ENCODE measurements at regions of chr11 and their contacts with region 1.

Region 1: GRCh38 chr11:73876424-73877300 is at the starts of genes COA4 and PAAF1:
- DNase-seq: peak; percentile 98
- H3K4me3 ChIP-seq: peak within 1 kb of the TSS; percentile 91 to 95 (median 93)
- H3K27ac ChIP-seq: peak within 1 kb of the TSS; percentile 94
- H3K4me1 ChIP-seq: peaks cover 3% of the 10 kb centered on the region
- H3K27me3 ChIP-seq: no peaks in the 10 kb centered on the region
- CTCF ChIP-seq: no peak
- total RNA-seq, gene COA4: 58.0 to 75.4 TPM
- total RNA-seq, gene PAAF1: 7.7 to 20.0 TPM

Region 2: GRCh38 chr11:73760679-73761402 is 115.8 kb before region 1 on chr11 and contains the start of gene RAB6A:
- CTCF ChIA-PET with region 1: no interaction called
- dilution Hi-C with region 1: no loop called
- in situ Hi-C with region 1: no loop called
- intact Hi-C with region 1: loop called (anchors 2 kb)
- DNase-seq: peak; percentile 99
- H3K4me3 ChIP-seq: peak within 1 kb of the TSS; percentile 83 to 91 (median 88)
- H3K27ac ChIP-seq: peak within 1 kb of the TSS; percentile 62
- H3K4me1 ChIP-seq: peaks cover 6% of the 10 kb centered on the region
- H3K27me3 ChIP-seq: no peaks in the 10 kb centered on the region
- CTCF ChIP-seq: peak; percentile 5 to 35
- total RNA-seq, gene RAB6A: 189 to 218 TPM

Region 3: DNA sequence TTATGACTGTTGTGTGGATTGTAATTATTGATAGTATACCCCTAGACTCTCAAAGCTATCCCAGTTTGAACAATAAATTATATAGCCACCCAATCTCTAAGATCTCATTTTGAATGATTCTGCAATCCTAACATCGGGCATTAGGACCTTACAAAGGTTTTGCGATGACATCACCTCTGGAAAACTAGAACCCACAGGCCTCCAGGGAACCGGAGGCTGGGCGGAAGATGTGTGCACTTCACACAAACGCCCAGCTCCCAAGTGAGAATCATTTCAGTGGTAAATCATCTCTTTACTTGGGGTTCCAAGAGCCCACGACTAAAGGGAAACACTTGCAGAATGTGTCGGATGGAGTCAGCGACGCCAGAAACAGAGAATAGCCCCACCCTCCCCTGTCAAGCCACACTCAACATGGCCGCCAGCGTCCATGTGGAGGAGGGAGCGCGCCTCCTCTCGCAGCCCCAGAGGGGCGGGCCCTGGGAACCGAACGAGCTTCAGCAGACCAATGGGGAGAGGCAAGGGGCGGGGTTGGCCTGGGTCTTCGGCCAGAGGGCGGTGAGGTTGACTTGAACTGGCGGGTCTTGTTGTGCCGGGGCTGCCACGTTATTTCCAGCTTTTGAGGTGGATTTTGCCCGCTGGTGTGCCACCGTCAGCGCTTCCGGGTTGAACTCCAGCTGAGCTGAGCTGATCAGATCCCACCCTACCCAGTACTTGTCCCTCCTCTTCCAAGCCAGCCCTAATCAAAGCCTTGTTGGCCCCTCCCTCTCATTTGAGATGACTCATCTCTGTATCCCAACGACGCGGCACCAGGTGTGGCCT is 97.4 kb before region 1 on chr11:
- CTCF ChIA-PET with region 1: no interaction called
- dilution Hi-C with region 1: no loop called
- in situ Hi-C with region 1: no loop called
- intact Hi-C with region 1: loop called (anchors 2 kb)
- DNase-seq: peak; percentile 98
- H3K4me3 ChIP-seq: peak overlapping the region; percentile 52 to 55 (median 54)
- H3K27ac ChIP-seq: peak overlapping the region; percentile 98
- H3K4me1 ChIP-seq: peaks cover 4% of the 10 kb centered on the region
- H3K27me3 ChIP-seq: no peaks in the 10 kb centered on the region
- CTCF ChIP-seq: no peak

Region 4: DNA sequence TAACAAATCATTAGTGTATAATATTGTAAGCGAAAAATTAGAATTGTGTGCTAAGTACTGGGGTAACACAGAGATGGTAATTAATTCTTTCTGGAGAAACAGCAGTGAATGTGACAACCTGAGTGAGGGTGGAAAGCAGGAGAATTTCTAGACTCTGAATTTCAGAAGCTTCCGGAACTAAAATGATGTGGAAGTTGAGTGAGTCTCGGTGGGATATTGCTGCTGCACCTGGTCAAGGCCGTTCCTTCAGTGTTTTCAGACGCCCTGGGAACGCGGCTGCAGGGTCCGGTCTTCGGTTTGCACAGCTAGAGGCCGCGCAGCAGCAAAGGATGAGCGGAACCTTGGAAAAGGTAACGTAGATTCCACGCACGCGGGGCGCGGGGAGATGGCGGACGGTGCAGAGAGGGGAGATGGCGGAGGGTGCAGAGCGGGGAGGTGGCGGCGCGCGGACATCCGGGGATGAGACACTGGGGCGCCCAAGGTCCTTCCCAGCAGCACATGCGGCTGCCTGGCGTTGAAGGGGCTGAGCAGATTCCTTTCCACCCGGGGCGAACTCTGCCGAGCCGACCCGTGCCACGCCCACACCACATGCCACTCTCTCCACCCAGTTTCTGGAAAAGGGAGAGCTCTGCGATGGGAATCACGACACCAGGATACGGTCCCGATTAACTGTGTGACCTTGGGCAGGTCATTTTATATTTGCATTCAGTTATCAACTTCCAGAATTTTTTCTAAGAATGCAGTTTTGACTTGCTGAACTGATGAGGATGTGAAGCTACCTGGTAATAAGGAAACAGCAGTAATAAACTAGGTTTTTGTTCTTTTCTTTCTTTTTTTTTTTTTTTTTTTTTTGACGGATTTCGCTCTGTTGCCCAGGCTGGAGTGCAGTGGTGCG is 88.8 kb before region 1 on chr11 and contains the start of gene MRPL48:
- CTCF ChIA-PET with region 1: no interaction called
- dilution Hi-C with region 1: no loop called
- in situ Hi-C with region 1: no loop called
- intact Hi-C with region 1: loop called (anchors 1 kb)
- DNase-seq: peak; percentile 91
- H3K4me3 ChIP-seq: peak within 1 kb of the TSS; percentile 71 to 100 (median 74)
- H3K27ac ChIP-seq: peak within 1 kb of the TSS; percentile 76
- H3K4me1 ChIP-seq: peaks cover 12% of the 10 kb centered on the region
- H3K27me3 ChIP-seq: no peaks in the 10 kb centered on the region
- CTCF ChIP-seq: no peak
- total RNA-seq, gene MRPL48: 12.8 to 35.1 TPM

Region 5: DNA sequence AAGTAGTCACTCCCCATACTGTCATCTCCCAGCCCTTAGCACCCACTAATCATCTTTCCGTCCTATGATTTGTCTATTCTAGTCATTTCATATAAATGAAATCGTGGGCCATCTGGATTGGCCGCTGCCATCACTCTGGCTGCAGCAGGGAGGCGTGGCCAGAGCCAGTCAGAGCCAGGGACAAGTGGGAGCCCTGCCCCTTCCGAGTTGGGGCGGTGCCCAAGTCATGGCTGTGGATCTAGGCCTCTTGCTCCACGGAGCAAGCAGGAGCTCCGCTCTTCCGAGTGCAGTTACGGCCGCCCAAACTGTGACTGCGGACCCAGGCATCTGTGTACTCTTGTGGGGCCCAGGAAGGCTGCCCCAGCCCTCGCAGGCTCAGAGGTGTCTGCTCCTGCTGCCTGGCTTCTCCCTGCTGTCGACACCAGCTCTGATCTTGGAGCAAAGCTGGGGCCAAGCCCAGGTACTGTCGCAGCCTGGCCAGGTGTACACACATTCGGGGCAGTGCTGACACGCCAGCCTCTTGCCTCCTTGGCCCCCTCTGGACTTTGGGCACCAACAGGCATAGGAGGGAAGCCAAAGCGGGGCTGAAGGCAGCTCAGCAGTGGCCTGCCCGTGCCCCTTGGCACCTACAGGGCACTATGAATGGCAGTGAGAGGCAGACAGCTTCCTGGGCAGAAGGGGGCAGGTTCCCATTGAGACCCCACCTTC is 80.6 kb before region 1 on chr11:
- CTCF ChIA-PET with region 1: no interaction called
- dilution Hi-C with region 1: loop called (anchors 5 kb)
- in situ Hi-C with region 1: no loop called
- intact Hi-C with region 1: no loop called
- DNase-seq: no peak
- H3K4me3 ChIP-seq: no peak overlapping the region
- H3K27ac ChIP-seq: no peak overlapping the region
- H3K4me1 ChIP-seq: no peaks in the 10 kb centered on the region
- H3K27me3 ChIP-seq: no peaks in the 10 kb centered on the region
- CTCF ChIP-seq: no peak

Region 6: GRCh38 chr11:73907191-73907590 is 30.5 kb after region 1 on chr11:
- CTCF ChIA-PET with region 1: no interaction called
- dilution Hi-C with region 1: no loop called
- in situ Hi-C with region 1: no loop called
- intact Hi-C with region 1: loop called (anchors 1 kb)
- DNase-seq: peak; percentile 67
- H3K4me3 ChIP-seq: no peak overlapping the region
- H3K27ac ChIP-seq: no peak overlapping the region
- H3K4me1 ChIP-seq: no peaks in the 10 kb centered on the region
- H3K27me3 ChIP-seq: no peaks in the 10 kb centered on the region
- CTCF ChIP-seq: peak; percentile 32 to 54

Region 7: DNA sequence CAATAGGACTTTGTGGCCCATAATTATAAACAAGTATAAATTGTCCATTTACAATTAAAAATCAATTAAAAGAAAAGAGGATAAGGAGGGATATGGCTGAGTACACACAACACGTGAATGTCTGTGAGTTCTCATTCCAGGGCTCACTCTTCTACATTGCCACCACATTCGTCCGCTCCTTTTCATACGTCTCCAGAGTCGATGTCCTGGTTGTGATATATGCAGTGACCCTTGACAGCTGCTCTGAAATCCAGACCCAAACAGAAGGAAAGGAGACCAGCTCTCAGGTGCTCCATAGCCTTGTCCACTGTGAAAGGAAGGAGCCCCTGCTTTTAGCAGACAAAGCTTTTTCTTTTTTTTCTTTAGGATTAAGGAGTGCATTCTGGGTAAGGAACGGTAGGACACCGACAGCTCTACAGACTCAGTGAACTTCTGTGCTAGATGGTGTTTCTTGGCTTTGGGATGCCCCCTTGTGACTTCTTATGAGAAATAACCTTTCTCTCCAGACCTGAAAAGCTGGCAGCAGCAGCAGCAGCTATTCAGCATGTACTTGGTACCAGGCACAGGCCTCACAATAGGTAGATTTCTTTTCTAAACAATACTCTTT is 54.5 kb after region 1 on chr11:
- CTCF ChIA-PET with region 1: no interaction called
- dilution Hi-C with region 1: no loop called
- in situ Hi-C with region 1: no loop called
- intact Hi-C with region 1: loop called (anchors 1 kb)
- DNase-seq: peak; percentile 68
- H3K4me3 ChIP-seq: no peak overlapping the region
- H3K27ac ChIP-seq: no peak overlapping the region
- H3K4me1 ChIP-seq: no peaks in the 10 kb centered on the region
- H3K27me3 ChIP-seq: no peaks in the 10 kb centered on the region
- CTCF ChIP-seq: peak; percentile 17 to 55